ENCODE measurements at regions of chr17 and their contacts with region 1.

Region 1: DNA sequence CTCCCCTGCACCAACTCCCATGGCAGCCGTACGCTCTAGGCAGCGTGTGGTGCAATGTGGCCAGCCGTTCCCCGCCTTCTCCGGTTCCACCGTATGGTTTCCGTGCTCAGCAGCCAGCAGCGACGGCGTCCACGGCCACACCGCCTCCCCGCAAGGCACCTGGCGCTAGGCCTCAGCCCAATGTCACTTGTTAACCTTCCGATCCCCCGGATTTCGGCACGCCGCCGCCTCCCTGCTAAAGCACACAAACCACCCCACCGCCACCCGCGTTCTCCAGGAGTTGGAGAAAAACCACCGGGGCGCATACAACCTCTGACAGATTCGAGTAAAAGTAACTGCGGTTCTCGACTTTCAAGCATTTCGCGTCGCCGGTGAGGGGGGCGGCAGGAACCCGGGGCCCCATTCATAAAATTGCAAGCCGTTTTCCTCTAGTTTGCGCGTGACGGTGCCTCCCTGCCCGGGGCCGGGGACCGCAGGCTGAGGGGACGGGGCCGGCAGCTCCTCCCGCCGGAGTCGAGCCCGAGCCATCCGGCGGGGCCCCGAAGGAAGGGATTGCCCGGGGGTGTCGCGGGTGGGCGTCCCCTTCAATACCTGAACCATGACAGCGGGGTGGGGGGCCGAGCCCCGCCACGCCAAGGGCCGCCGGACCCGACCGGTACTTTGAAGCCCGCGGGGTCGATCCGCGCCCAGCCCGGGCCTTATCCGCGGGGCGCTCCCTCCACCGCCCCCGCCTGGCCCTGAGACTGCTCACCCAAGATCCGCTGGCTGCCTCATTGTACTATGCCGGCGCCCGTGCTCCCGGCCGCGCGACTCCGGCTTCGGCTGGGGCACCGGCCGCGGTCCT is at the start of gene TEX2:
- DNase-seq: peak; percentile 75 to 89
- ATAC-seq: peak; percentile 65 to 88 (median 78)
- H3K4me3 ChIP-seq: peak within 1 kb of the TSS; percentile 97
- H3K27ac ChIP-seq: peak within 1 kb of the TSS; percentile 98
- H3K4me1 ChIP-seq: peaks cover 52% of the 10 kb centered on the region
- H3K27me3 ChIP-seq: no peaks in the 10 kb centered on the region
- CTCF ChIP-seq: no peak
- total RNA-seq, gene TEX2: 45.7 to 72.7 (median 55.7) TPM

Region 2: GRCh38 chr17:64073771-64074703 is 188.6 kb before region 1 on chr17:
- intact Hi-C with region 1: no loop called
- DNase-seq: no peak
- ATAC-seq: no peak
- H3K4me3 ChIP-seq: no peak overlapping the region
- H3K27ac ChIP-seq: no peak overlapping the region
- H3K4me1 ChIP-seq: no peaks in the 10 kb centered on the region
- H3K27me3 ChIP-seq: no peaks in the 10 kb centered on the region
- CTCF ChIP-seq: no peak

Region 3: GRCh38 chr17:64174686-64175456 is 87.8 kb before region 1 on chr17:
- intact Hi-C with region 1: loop called in 1 of 2 experiments (anchors 5 kb)
- DNase-seq: peak in 1 of 2 donors; percentile 31
- ATAC-seq: peak; percentile 46 to 68 (median 62)
- H3K4me3 ChIP-seq: no peak overlapping the region
- H3K27ac ChIP-seq: peak overlapping the region; percentile 86
- H3K4me1 ChIP-seq: peaks cover 71% of the 10 kb centered on the region
- H3K27me3 ChIP-seq: no peaks in the 10 kb centered on the region
- CTCF ChIP-seq: no peak

Region 4: DNA sequence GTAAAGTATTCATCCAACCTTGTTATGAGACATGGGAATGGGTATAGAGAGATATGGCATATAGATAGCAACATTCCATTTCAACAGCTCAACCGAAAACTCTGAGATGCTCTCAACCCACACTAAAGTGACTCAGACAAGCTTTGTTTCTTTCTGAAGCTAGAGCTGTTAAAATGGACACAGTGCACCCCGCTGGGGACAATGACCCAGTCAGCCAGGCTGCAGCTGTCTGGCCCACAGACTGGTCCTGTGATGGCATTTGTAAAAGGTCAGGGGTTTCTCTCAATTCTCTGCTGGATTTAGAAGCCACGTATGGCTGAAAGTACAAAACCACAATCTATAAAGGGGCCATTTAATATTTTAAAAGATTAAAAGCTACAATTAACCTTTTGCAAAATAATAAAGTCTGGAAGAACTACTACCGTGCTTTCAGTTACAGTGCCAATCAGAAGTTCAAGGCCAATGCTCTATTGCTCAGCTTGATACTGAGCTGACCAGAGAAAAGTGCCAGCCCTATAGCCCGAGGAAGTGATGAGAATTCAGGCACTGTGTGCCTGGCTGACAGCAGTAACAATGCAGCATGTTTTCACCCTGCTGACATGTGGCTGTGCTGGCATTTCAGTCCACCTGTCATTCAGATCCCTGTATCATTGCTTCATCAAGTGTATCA is 59.8 kb before region 1 on chr17:
- intact Hi-C with region 1: no loop called
- DNase-seq: no peak
- ATAC-seq: peak; percentile 86 to 88 (median 86)
- H3K4me3 ChIP-seq: no peak overlapping the region
- H3K27ac ChIP-seq: peak overlapping the region; percentile 82
- H3K4me1 ChIP-seq: peaks cover 78% of the 10 kb centered on the region
- H3K27me3 ChIP-seq: no peaks in the 10 kb centered on the region
- CTCF ChIP-seq: no peak

Region 5: DNA sequence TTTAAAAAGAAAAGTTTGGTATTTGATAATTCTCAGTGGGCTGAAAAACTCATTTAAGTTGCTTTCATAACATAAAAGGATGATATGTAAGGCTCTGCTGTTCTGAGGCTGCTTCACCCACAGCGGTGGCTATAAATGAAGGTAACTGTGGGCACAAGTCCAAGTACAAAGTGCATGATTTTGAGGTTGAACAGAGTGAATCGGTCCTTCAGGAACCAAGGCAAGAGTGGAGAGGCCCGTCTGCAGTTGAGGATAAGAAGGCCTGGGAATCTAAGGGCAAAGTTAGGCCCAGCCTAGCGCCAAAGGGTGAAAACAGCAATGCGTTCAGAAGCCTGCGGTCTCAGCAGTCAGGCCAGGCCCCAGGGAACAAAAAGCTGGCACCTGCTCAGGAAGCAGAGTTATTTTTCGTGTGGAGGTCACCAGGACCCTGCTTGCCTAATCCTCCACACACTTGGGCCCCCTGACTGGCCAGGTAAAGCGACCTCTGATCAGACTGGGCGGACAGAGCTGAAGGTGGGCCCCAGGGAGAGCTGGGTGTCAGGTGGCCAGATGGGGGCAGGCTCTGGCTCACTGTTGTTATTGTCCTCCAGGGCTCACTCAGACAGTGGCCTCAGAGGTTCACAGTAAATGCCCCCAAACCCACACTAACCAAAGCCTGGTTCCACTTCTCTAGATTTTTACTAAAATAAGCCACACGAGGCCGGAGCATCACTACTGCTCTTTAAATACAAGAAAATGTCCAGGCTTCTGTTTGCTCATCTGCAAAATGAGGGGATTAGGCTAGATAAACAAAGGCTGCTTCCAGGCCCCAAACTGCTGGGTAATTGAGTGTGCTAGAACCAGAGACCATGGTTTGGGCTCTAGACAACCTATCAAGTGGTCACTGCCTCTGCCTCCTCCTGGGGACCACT is 46.0 kb before region 1 on chr17:
- intact Hi-C with region 1: loop called (anchors 5 kb)
- DNase-seq: peak; percentile 44 to 71
- ATAC-seq: peak; percentile 69 to 81 (median 75)
- H3K4me3 ChIP-seq: peak overlapping the region; percentile 28
- H3K27ac ChIP-seq: peak overlapping the region; percentile 80
- H3K4me1 ChIP-seq: peaks cover 44% of the 10 kb centered on the region
- H3K27me3 ChIP-seq: no peaks in the 10 kb centered on the region
- CTCF ChIP-seq: no peak

Region 6: GRCh38 chr17:64297467-64298098 is 34.9 kb after region 1 on chr17:
- intact Hi-C with region 1: no loop called
- DNase-seq: no peak
- ATAC-seq: peak in 2 of 4 donors; percentile 32 to 67
- H3K4me3 ChIP-seq: no peak overlapping the region
- H3K27ac ChIP-seq: no peak overlapping the region
- H3K4me1 ChIP-seq: no peaks in the 10 kb centered on the region
- H3K27me3 ChIP-seq: no peaks in the 10 kb centered on the region
- CTCF ChIP-seq: no peak

Region 7: DNA sequence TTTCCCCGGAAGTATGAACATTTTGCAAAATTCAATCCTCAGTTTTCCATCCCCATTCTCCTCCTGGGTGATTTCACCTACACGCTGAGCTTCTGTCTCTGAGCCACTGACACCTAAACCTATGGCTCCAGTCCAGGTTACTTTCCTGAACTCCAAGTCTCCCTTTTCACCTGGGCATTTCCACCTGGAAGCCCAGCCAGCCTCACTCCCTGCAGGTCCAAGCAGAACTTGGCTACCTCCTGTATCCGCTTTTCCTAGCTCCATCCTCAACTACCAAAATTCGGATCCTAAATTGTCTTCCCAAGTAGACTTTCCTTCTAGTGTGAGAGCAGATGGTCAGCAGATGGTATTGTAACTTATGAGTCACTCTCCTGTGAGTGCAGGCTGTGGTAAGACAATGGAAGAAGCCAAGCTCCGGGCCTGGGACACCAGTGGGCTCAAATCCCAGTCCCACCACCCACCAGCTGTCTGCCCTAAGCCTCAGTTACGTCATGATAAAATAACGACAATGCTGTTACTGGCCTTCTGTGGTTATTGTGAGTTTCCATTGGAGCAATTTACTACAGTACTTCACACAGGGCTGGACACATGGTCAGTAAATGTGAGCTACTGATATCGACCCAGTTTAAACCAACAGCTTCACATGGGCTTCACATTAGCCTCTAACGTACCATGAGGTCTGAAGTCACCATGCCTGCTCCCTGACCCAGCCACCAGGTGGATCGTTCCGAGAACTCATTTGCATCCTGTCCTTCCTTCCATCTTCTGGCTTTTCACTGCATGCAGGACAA is 94.7 kb after region 1 on chr17:
- intact Hi-C with region 1: no loop called
- DNase-seq: peak; percentile 69 to 83
- ATAC-seq: peak; percentile 80 to 89 (median 82)
- H3K4me3 ChIP-seq: no peak overlapping the region
- H3K27ac ChIP-seq: peak overlapping the region; percentile 60
- H3K4me1 ChIP-seq: peaks cover 18% of the 10 kb centered on the region
- H3K27me3 ChIP-seq: peaks cover 0 to 4% (median 0%) of the 10 kb centered on the region in 3 donors
- CTCF ChIP-seq: no peak

Measured in psoas muscle (tissue), 8 donors.